ENCODE measurements at regions of chr2 and their contacts with region 1.

Region 1: GRCh38 chr2:28751252-28751955 is at the start of gene PPP1CB:
- DNase-seq: peak; percentile 97
- H3K4me3 ChIP-seq: peak within 1 kb of the TSS; percentile 93 to 97 (median 93)
- H3K27ac ChIP-seq: peak within 1 kb of the TSS; percentile 93
- H3K4me1 ChIP-seq: peaks cover 30% of the 10 kb centered on the region
- H3K27me3 ChIP-seq: no peaks in the 10 kb centered on the region
- CTCF ChIP-seq: peak in 1 of 2 donors; percentile 45
- total RNA-seq, gene PPP1CB: 266 to 282 TPM

Region 2: GRCh38 chr2:28452534-28453081 is 298.8 kb before region 1 on chr2:
- CTCF ChIA-PET with region 1: no interaction called
- dilution Hi-C with region 1: no loop called
- in situ Hi-C with region 1: no loop called
- intact Hi-C with region 1: loop called (anchors 5 kb)
- DNase-seq: no peak
- H3K4me3 ChIP-seq: no peak overlapping the region
- H3K27ac ChIP-seq: no peak overlapping the region
- H3K4me1 ChIP-seq: peaks cover 52% of the 10 kb centered on the region
- H3K27me3 ChIP-seq: no peaks in the 10 kb centered on the region
- CTCF ChIP-seq: peak; percentile 98 to 99

Region 3: GRCh38 chr2:28594289-28595108 is 156.9 kb before region 1 on chr2:
- CTCF ChIA-PET with region 1: interaction called, 8 read pairs
- dilution Hi-C with region 1: no loop called
- in situ Hi-C with region 1: loop called in 1 of 2 experiments (anchors 10 kb)
- intact Hi-C with region 1: loop called (anchors 1 kb)
- DNase-seq: peak; percentile 94
- H3K4me3 ChIP-seq: peak overlapping the region in 1 of 3 experiments; percentile 2
- H3K27ac ChIP-seq: peak overlapping the region; percentile 63
- H3K4me1 ChIP-seq: peaks cover 38% of the 10 kb centered on the region
- H3K27me3 ChIP-seq: no peaks in the 10 kb centered on the region
- CTCF ChIP-seq: peak; percentile 79 to 83

Region 4: DNA sequence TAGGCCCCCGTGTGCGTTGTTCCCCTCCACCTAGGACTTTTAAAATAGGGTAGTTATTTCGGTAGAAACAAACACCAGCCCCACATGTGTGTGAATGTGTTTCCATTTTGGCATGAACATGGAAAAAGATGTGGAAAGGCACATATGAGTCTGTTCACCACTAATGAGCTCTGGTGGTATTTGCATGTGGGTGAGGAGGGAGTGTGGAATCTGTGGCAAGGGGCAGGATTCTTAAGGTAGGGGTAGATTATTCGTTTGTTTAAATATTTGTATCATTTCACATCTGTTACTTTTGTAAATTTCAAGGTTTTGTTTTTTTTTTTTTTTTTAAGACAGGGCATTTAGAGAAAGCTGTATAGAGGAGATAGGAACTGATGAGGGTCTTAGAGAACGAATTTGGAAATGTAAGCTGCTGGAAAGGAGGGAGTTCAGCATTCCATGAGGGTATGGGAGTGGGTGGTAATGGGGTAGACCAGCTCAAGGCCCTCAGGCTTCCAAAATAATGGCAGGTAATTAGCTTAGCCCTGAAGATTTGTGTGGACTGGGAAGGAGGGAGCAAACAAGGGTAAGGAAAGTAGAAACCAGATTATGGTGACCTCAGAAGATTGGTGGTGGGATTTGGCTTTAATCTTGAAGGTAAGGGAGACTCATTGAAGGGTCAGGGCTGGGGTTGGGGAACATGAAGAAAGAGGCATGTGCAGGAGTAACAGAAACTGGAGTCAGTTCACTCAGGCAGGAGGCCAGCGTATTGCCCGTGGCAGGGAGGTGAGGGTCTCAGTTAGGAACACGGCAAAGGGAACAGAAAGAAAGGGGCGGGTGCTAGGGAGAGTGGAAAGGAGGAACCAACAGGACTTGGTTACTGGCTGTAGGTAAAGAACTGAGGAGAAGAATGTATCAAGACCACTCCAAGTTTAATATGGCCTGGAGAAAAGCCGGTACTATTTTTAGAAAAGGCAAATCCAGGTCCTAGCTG is 131.9 kb before region 1 on chr2:
- CTCF ChIA-PET with region 1: no interaction called
- dilution Hi-C with region 1: loop called (anchors 5 kb)
- in situ Hi-C with region 1: no loop called
- intact Hi-C with region 1: loop called (anchors 1 kb)
- DNase-seq: no peak
- H3K4me3 ChIP-seq: no peak overlapping the region
- H3K27ac ChIP-seq: no peak overlapping the region
- H3K4me1 ChIP-seq: peaks cover 28% of the 10 kb centered on the region
- H3K27me3 ChIP-seq: no peaks in the 10 kb centered on the region
- CTCF ChIP-seq: no peak

Region 5: DNA sequence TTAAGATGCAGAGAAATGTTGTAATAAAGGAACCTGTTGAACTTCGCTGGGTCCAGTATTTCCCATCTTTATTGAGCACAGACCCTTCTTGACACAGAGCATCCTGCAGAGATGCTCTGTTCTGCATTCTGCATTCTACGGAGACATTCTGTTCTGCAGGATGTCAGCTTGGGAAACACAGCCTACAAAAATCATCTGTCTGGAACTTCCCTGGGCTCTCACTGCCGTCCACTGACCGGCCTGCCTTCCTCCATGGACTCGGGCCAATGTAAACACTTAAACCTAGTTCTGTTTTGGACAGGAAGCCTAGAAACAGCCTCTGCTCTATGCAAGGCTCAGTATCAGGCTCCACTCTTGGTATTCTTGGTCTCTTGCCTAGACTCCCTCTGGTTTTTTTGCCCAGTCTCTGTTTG is 89.8 kb before region 1 on chr2:
- CTCF ChIA-PET with region 1: no interaction called
- dilution Hi-C with region 1: no loop called
- in situ Hi-C with region 1: no loop called
- intact Hi-C with region 1: loop called (anchors 1 kb)
- DNase-seq: peak; percentile 78
- H3K4me3 ChIP-seq: no peak overlapping the region
- H3K27ac ChIP-seq: no peak overlapping the region
- H3K4me1 ChIP-seq: peaks cover 42% of the 10 kb centered on the region
- H3K27me3 ChIP-seq: no peaks in the 10 kb centered on the region
- CTCF ChIP-seq: no peak

Region 6: GRCh38 chr2:28736034-28736433 is 15.4 kb before region 1 on chr2:
- CTCF ChIA-PET with region 1: no interaction called
- dilution Hi-C with region 1: no loop called
- in situ Hi-C with region 1: no loop called
- intact Hi-C with region 1: no loop called
- DNase-seq: peak; percentile 47
- H3K4me3 ChIP-seq: no peak overlapping the region
- H3K27ac ChIP-seq: no peak overlapping the region
- H3K4me1 ChIP-seq: no peaks in the 10 kb centered on the region
- H3K27me3 ChIP-seq: no peaks in the 10 kb centered on the region
- CTCF ChIP-seq: no peak

Region 7: GRCh38 chr2:28780496-28780895 is 29.1 kb after region 1 on chr2:
- CTCF ChIA-PET with region 1: no interaction called
- dilution Hi-C with region 1: no loop called
- in situ Hi-C with region 1: no loop called
- intact Hi-C with region 1: no loop called
- DNase-seq: peak; percentile 23
- H3K4me3 ChIP-seq: no peak overlapping the region
- H3K27ac ChIP-seq: no peak overlapping the region
- H3K4me1 ChIP-seq: no peaks in the 10 kb centered on the region
- H3K27me3 ChIP-seq: no peaks in the 10 kb centered on the region
- CTCF ChIP-seq: no peak

Measured in mammary epithelial cell (primary cell).